Vagina (tissue), 2 donors: ENCODE measurements at regions of chr20 and their contacts with region 1.

Region 1: DNA sequence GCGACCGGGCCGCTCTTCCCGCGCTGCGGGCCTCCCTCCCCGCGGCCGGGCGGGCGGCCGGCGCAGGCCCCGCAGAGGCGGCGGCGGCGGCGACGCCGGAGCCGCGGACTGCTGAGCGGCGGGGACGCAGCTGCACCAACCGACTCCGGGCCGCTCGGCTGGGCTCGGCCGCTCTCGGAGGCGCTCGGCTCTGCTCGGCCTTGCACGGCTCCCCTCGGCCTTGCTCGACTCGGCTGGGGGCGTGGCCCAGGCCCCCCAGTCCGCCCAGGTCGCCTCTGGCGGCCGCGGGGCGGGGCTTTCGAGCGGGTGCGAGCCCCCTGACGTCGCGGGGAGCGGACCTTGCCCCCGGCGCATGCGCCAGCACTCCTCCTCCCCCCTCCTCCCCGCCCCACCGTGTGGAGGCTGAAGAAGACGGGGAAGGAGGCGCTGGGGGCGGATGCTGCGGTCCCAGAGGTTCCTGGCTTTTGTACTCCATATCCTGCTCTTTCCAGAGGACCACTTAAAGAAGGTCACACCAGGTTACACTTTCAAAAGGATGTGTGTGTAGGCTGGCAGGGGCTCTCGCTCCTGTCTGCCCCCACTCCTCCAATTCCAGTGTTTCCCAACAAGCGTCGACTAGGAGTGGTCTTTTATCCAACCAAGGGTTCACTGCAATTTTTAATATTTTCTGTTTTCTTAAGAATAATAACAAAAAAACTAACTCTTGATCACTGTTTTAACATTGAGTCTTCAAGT is at the start of gene ZHX3:
- DNase-seq: peak in 1 of 2 donors; percentile 96
- H3K4me3 ChIP-seq: peak within 1 kb of the TSS; percentile 85 to 95
- H3K27ac ChIP-seq: peak within 1 kb of the TSS; percentile 88
- H3K4me1 ChIP-seq: peaks cover 38% of the 10 kb centered on the region
- H3K27me3 ChIP-seq: no peaks in the 10 kb centered on the region
- CTCF ChIP-seq: no peak
- POLR2A ChIP-seq: peak in 1 of 2 donors; percentile 35
- total RNA-seq, gene ZHX3: 26.8 TPM

Region 2: DNA sequence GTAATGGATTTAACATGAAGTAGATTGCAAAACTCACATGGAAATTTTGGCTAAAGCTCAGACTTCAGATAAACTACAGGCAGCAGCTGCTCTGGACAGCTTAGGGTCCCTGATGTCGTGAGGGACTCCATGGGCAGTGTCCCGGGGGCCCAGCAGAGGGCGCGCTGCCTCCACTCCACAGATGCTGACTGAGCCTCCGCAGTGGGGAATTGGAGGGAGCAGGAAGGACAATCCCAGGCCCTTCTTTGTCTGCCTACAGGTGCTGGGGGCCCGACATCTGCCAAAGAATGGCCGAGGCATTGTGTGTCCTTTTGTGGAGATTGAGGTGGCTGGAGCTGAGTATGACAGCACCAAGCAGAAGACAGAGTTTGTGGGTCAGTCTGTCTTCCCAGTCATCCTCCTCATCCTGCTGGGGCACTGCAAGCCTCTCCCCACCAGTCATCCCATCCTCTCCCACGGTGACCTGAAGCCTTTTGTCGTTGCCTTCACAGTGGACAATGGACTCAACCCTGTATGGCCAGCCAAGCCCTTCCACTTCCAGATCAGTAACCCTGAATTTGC is 144.5 kb before region 1 on chr20:
- intact Hi-C with region 1: no loop called
- DNase-seq: peak; percentile 84 to 92
- H3K4me3 ChIP-seq: no peak overlapping the region
- H3K27ac ChIP-seq: peak overlapping the region; percentile 83
- H3K4me1 ChIP-seq: peaks cover 59% of the 10 kb centered on the region
- H3K27me3 ChIP-seq: no peaks in the 10 kb centered on the region
- CTCF ChIP-seq: peak; percentile 94 to 97 (median 97)
- POLR2A ChIP-seq: peak in 1 of 2 donors; percentile 8

Region 3: GRCh38 chr20:41218466-41218865 is 99.2 kb before region 1 on chr20:
- intact Hi-C with region 1: no loop called
- DNase-seq: no peak
- H3K4me3 ChIP-seq: no peak overlapping the region
- H3K27ac ChIP-seq: no peak overlapping the region
- H3K4me1 ChIP-seq: peaks cover 19% of the 10 kb centered on the region
- H3K27me3 ChIP-seq: no peaks in the 10 kb centered on the region
- CTCF ChIP-seq: no peak
- POLR2A ChIP-seq: no peak

Region 4: DNA sequence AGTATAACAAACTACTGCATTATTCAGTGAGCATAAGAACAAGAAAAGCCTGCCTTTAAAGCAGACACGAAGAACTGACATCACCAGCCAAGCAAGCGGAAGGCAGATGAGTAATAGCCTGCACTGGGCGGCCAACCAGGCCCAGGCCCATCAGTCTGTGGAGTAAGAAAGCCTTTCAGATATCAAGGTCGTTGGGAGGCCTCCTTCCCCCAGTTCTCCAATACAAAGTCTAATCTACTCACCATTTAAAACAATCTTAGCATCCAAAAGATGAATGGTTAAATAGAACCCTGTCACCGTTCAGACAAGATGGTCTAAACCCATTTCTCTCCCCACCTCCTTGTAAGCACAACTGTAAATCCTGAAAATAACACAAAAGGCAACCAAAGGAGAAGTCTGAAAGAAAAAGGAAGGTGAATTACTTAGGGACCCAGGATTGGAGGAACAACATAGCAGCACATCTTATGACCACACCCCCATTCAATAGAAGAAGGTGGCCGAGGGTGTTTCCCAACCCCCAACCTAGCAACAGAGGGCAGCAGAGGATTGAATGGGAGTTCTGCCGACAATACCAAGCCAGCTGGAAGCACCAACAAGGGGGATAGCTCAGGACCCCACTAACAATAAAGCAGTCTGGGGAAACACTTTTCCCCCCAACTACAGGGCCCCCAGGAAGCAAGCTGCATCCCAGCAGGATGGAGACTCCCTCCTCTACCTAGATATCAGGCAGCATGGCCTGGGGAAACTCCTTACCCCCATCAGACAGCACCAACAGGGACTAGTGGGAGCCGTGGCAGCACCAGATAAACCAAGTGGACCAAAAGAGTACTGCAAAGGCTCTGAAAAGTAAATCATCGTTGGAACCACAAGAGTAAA is 68.1 kb before region 1 on chr20:
- intact Hi-C with region 1: loop called (anchors 5 kb)
- DNase-seq: no peak
- H3K4me3 ChIP-seq: no peak overlapping the region
- H3K27ac ChIP-seq: peak overlapping the region; percentile 98
- H3K4me1 ChIP-seq: peaks cover 57% of the 10 kb centered on the region
- H3K27me3 ChIP-seq: no peaks in the 10 kb centered on the region
- CTCF ChIP-seq: no peak
- POLR2A ChIP-seq: no peak

Region 5: DNA sequence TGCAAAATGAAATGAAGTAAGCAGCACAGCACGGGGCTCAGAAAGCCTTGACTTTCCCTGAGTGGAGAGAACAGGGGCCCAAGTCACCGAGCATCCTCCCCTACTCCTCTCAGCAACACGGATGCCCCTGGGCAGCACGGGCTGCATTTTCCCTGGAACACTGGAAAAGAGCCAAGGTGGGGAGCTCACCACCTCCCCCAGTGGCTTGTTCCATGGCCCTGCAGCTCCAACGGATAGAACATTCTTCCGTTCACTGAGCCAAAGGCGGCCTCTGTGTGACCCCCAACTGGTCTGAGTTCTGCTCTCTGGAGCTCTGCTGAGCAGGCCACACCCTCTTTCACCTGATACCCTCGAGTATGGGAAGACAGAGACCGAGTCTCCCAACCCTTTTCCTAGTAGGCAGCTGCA is 69.7 kb after region 1 on chr20:
- intact Hi-C with region 1: no loop called
- DNase-seq: no peak
- H3K4me3 ChIP-seq: no peak overlapping the region
- H3K27ac ChIP-seq: no peak overlapping the region
- H3K4me1 ChIP-seq: peaks cover 25% of the 10 kb centered on the region
- H3K27me3 ChIP-seq: peaks cover 4% of the 10 kb centered on the region
- CTCF ChIP-seq: no peak
- POLR2A ChIP-seq: no peak

Region 6: GRCh38 chr20:41776421-41776820 is 458.7 kb after region 1 on chr20:
- intact Hi-C with region 1: no loop called
- DNase-seq: peak in 1 of 2 donors; percentile 65
- H3K4me3 ChIP-seq: no peak overlapping the region
- H3K27ac ChIP-seq: no peak overlapping the region
- H3K4me1 ChIP-seq: no peaks in the 10 kb centered on the region
- H3K27me3 ChIP-seq: no peaks in the 10 kb centered on the region
- CTCF ChIP-seq: no peak
- POLR2A ChIP-seq: no peak